ENCODE measurements at regions of chr16 and their contacts with region 1.

Region 1: DNA sequence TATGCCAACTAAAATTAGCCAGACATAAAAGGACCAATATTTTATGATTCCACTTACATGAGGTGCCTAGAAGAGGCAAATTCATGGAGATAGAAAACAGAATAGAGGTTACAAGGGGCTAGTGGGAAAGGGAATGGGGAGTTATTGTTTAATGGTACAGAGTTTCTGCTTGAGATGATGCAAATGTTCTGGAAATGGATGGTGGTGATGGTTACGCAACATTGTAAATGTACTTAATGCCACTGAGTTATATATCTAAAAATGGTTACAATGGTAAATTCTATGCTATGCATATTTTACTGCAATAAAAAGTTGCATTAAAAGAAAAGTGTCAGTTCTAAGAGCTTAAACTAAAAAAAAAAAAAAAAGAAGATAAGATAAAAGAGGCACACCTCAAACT is 17.9 kb downstream of the MT1X start:
- DNase-seq: no peak
- ATAC-seq: no peak
- H3K4me3 Mint-ChIP-seq: no peak overlapping the region
- H3K27ac Mint-ChIP-seq: no peak overlapping the region
- H3K4me1 Mint-ChIP-seq: peaks cover 8% of the 10 kb centered on the region
- H3K27me3 Mint-ChIP-seq: no peaks in the 10 kb centered on the region

Region 2: GRCh38 chr16:56450986-56451752 is 249.0 kb before region 1 on chr16 and contains the starts of genes NUDT21 and OGFOD1:
- CTCF ChIA-PET with region 1: interaction called, 5 read pairs
- POLR2A ChIA-PET with region 1: no interaction called
- intact Hi-C with region 1: loop called in 1 of 2 experiments (anchors 1 kb)
- DNase-seq: peak; percentile 95
- ATAC-seq: peak; percentile 97
- H3K4me3 Mint-ChIP-seq: peak within 1 kb of the TSS; percentile 84
- H3K27ac Mint-ChIP-seq: peak within 1 kb of the TSS; percentile 93
- H3K4me1 Mint-ChIP-seq: peaks cover 51% of the 10 kb centered on the region
- H3K27me3 Mint-ChIP-seq: no peaks in the 10 kb centered on the region
- total RNA-seq, gene NUDT21: 333 to 349 TPM
- total RNA-seq, gene OGFOD1: 56.2 to 64.1 TPM

Region 3: DNA sequence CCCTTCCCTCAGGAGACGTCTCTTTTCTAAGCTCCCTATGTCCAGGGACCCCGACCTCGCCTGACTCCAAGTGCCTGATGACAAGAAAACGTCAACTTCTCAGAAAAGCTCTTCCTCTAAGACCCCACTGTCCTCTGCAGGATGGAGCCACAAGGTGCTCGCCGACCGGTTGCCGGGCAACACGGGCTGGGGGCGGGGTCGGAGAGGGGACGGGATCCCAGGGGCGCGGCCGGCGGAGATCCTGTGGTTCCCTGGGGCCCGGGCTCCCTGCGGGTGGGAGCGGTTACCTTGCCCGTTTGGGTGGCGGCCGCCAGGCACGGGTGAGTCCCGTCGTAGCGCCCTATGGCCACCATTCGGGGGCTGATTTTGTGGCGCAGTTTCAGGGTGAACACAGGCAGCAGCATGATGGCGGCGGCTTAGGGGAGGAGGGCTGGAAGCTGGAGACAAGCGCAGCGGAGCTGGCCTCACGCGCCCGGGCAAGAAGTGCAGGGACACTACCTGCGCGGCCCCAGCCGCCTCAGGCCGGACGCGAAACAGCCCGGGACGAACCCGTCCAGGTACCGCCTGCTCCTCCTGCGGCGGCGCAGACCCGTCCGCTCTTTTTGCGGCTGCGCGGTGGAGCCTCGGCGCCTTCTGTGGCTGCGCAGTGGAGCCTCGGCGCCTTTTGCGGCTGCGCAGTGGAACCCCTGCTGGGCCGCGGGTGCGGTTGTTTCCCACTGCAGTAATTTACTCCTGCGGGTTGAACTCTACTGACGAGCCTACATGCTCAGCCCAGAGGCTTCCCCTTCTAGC is 180.5 kb before region 1 on chr16 and contains the start of gene BBS2:
- CTCF ChIA-PET with region 1: interaction called, 13 read pairs
- POLR2A ChIA-PET with region 1: no interaction called
- intact Hi-C with region 1: loop called (anchors 1 kb)
- DNase-seq: peak; percentile 93
- ATAC-seq: peak; percentile 90
- H3K4me3 Mint-ChIP-seq: peak within 1 kb of the TSS; percentile 79
- H3K27ac Mint-ChIP-seq: peak within 1 kb of the TSS; percentile 61
- H3K4me1 Mint-ChIP-seq: peaks cover 32% of the 10 kb centered on the region
- H3K27me3 Mint-ChIP-seq: no peaks in the 10 kb centered on the region
- total RNA-seq, gene BBS2: 15.4 to 23.2 TPM

Region 4: GRCh38 chr16:56643080-56643778 is 57.0 kb before region 1 on chr16:
- CTCF ChIA-PET with region 1: interaction called, 5 read pairs
- POLR2A ChIA-PET with region 1: no interaction called
- intact Hi-C with region 1: loop called in 1 of 2 experiments (anchors 1 kb)
- DNase-seq: peak; percentile 90
- ATAC-seq: peak; percentile 100
- H3K4me3 Mint-ChIP-seq: peak overlapping the region; percentile 39
- H3K27ac Mint-ChIP-seq: peak overlapping the region; percentile 39
- H3K4me1 Mint-ChIP-seq: peaks cover 20% of the 10 kb centered on the region
- H3K27me3 Mint-ChIP-seq: peaks cover 43% of the 10 kb centered on the region

Region 5: DNA sequence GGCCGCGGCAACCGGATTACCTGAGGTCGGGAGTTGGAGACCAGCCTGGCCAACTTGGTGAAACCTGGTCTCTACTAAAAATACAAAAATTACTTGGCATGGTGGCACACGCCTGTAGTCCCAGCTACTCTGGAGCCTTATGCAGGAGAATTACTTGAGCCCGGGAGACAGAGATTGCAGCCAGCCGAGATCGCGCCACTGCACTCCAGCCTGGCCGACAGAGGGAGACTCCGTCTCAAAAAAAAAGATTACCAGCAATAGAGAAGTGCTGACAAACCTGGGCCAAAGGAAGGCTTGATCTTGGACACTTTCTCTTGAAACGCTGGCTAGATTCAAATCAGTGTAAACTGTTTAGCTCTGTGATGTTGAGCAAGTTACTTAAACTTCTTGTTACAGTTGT is 26.3 kb before region 1 on chr16:
- CTCF ChIA-PET with region 1: interaction called, 16 read pairs
- POLR2A ChIA-PET with region 1: no interaction called
- intact Hi-C with region 1: loop called in 1 of 2 experiments (anchors 1 kb)
- DNase-seq: peak; percentile 53
- ATAC-seq: no peak
- H3K4me3 Mint-ChIP-seq: no peak overlapping the region
- H3K27ac Mint-ChIP-seq: no peak overlapping the region
- H3K4me1 Mint-ChIP-seq: peaks cover 19% of the 10 kb centered on the region
- H3K27me3 Mint-ChIP-seq: peaks cover 49% of the 10 kb centered on the region

Region 6: DNA sequence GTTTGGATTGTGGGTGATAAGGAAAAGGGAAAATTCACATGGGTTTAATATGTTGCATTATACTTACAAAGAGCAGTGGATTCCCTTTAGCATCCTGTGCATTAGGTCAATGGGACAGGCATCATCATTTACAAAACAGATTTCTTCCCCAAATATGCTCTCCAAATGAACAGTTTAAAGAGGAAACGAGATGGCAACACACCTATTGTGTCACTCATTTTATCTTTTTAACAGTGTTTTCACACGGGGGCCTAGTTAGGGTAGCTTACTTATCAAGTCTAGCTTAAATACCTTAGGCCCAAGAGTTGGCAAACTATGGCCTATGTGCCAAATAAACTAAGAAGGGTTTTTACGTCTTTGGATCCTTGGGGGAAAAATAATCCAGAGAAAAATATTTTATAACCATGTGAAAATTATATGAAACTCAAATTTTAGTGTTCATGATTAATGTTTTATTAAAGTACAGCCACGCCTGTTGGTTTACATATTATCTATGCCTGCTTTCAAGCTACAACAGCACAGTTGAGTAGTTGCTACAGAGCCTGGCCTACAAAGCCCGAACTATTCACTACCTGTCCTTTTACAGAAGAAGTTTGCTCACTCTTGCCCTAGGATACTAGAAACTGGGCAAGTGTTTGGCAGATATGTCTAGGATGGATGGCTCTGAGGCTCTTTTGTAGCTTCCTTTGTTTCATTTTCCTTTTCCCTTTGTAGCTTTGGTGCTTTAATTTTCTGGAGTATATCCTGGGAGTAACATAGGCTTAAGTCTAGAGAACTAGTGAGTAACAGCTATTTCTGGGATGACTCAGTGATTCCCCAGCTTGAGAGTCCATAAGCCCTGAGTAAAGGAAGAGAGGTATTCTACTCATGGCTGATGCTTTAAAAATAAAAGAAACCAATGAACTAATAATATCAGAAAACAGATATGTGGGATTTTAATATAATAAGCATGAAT is 42.1 kb after region 1 on chr16:
- CTCF ChIA-PET with region 1: interaction called, 15 read pairs
- POLR2A ChIA-PET with region 1: no interaction called
- intact Hi-C with region 1: no loop called
- DNase-seq: no peak
- ATAC-seq: peak; percentile 73
- H3K4me3 Mint-ChIP-seq: no peak overlapping the region
- H3K27ac Mint-ChIP-seq: no peak overlapping the region
- H3K4me1 Mint-ChIP-seq: peaks cover 37% of the 10 kb centered on the region
- H3K27me3 Mint-ChIP-seq: no peaks in the 10 kb centered on the region

Measured in activated CD4-positive, alpha-beta T cell treated with anti-CD3 and anti-CD28 coated beads for 36 hours (primary cell).